Endothelial cell of umbilical vein (primary cell): ENCODE measurements at regions of chr5 and their contacts with region 1.

Region 1: DNA sequence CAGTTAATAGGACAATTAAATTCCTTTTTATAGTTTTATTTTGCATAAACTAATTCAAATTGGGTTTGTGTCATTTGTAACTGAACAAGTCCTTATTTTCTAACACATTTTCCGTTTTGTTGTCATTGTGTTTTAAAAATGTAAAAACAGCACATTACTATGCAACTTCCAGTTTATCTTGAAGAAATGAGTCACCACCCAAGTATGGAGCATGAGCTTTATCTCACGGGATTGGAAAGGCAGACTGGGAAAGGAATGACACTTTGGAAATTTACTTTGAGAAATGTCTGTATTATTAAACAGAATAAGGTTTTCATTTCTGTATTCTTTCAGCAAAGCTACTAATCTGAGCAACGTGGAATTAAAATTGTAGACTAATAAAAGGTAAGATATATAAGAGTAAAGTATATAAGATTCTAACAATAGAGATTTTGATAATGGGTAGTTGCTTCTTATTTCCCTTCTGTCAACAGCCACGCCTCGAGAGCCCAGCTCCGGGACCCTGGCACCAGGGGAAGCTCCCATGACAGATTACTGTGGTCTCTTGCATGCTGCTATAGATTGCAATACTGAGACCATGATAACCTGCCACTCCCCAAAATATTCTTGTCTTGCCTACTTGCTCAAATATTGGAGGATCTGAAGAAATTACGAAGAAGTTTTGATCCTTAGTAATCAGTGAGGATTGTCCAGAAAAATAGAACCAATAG is 433.1 kb downstream of the CHSY3 start:
- DNase-seq: peak; percentile 87
- H3K4me3 ChIP-seq: no peak overlapping the region
- H3K27ac ChIP-seq: peak overlapping the region; percentile 78
- H3K4me1 ChIP-seq: peaks cover 37% of the 10 kb centered on the region
- H3K27me3 ChIP-seq: no peaks in the 10 kb centered on the region
- CTCF ChIP-seq: no peak
- POLR2A ChIP-seq: no peak

Region 2: GRCh38 chr5:130323804-130324454 is 13.4 kb before region 1 on chr5:
- CTCF ChIA-PET with region 1: interaction called, 4 read pairs
- POLR2A ChIA-PET with region 1: no interaction called
- dilution Hi-C with region 1: no loop called
- intact Hi-C with region 1: loop called (anchors 1 kb)
- DNase-seq: peak; percentile 84
- H3K4me3 ChIP-seq: no peak overlapping the region
- H3K27ac ChIP-seq: peak overlapping the region; percentile 86
- H3K4me1 ChIP-seq: peaks cover 12% of the 10 kb centered on the region
- H3K27me3 ChIP-seq: no peaks in the 10 kb centered on the region
- CTCF ChIP-seq: no peak
- POLR2A ChIP-seq: no peak

Region 3: GRCh38 chr5:130400090-130400489 is 62.8 kb after region 1 on chr5:
- CTCF ChIA-PET with region 1: no interaction called
- POLR2A ChIA-PET with region 1: no interaction called
- dilution Hi-C with region 1: no loop called
- intact Hi-C with region 1: loop called (anchors 2 kb)
- DNase-seq: peak; percentile 42
- H3K4me3 ChIP-seq: no peak overlapping the region
- H3K27ac ChIP-seq: no peak overlapping the region
- H3K4me1 ChIP-seq: no peaks in the 10 kb centered on the region
- H3K27me3 ChIP-seq: no peaks in the 10 kb centered on the region
- CTCF ChIP-seq: no peak
- POLR2A ChIP-seq: no peak

Region 4: DNA sequence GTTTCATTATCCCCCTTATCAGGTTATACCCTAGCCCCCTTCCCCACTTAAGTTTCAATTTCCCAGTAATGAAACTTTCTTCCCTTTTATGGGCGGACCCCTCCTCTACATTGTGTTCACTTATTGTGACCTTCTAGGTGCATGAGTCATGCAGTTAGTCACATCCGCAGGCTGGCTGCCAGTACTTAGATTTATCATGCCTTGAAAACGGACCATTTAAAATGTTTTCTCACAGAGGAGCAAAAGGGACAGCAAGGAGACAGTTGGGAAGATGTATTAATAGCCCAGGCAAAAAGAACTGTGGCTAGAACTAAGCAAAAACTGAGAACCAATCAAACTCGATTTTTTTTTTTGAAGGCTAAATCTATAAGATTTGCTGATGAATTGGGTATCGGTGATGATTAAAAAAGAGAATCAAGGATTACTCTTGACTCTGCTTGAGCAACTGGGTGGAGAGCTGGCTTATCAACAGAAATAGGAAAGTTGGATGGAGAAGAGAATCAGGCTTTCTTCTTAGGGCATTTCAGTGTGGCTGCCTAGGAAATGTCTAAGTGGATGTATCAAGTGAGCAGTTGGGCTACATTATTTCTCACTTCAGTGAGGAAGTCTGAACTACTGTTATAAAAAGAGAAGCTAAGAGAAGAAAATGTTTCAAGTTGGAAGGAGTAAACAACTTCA is 212.7 kb after region 1 on chr5:
- CTCF ChIA-PET with region 1: no interaction called
- POLR2A ChIA-PET with region 1: no interaction called
- dilution Hi-C with region 1: no loop called
- intact Hi-C with region 1: loop called (anchors 5 kb)
- DNase-seq: peak; percentile 73
- H3K4me3 ChIP-seq: no peak overlapping the region
- H3K27ac ChIP-seq: peak overlapping the region; percentile 63
- H3K4me1 ChIP-seq: peaks cover 12% of the 10 kb centered on the region
- H3K27me3 ChIP-seq: no peaks in the 10 kb centered on the region
- CTCF ChIP-seq: no peak
- POLR2A ChIP-seq: no peak

Region 5: DNA sequence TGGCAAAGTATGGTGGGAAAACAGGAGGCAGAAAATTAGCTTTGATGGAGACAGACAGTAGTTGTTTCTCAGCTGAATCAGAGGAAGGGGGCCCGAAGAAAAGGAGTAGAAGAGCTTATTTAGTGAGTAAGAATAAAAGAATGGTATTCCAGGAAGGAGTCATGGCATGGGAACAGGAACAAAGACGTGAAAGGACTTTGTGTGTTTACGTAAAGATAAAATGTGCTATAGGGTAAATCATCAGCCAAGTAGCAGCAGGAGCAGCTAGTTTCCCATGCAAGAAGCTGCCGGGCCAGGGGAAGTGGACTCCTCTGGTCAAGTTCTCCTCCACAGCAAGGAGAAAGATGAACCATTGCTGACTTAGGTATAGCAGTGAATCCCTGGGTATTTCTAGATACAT is 373.3 kb after region 1 on chr5:
- CTCF ChIA-PET with region 1: no interaction called
- POLR2A ChIA-PET with region 1: no interaction called
- dilution Hi-C with region 1: no loop called
- intact Hi-C with region 1: loop called (anchors 5 kb)
- DNase-seq: peak; percentile 86
- H3K4me3 ChIP-seq: no peak overlapping the region
- H3K27ac ChIP-seq: peak overlapping the region; percentile 48
- H3K4me1 ChIP-seq: peaks cover 26% of the 10 kb centered on the region
- H3K27me3 ChIP-seq: no peaks in the 10 kb centered on the region
- CTCF ChIP-seq: no peak
- POLR2A ChIP-seq: no peak